Ascending aorta (tissue), 2 donors: ENCODE measurements at regions of chr2 and their contacts with region 1.

Region 1: DNA sequence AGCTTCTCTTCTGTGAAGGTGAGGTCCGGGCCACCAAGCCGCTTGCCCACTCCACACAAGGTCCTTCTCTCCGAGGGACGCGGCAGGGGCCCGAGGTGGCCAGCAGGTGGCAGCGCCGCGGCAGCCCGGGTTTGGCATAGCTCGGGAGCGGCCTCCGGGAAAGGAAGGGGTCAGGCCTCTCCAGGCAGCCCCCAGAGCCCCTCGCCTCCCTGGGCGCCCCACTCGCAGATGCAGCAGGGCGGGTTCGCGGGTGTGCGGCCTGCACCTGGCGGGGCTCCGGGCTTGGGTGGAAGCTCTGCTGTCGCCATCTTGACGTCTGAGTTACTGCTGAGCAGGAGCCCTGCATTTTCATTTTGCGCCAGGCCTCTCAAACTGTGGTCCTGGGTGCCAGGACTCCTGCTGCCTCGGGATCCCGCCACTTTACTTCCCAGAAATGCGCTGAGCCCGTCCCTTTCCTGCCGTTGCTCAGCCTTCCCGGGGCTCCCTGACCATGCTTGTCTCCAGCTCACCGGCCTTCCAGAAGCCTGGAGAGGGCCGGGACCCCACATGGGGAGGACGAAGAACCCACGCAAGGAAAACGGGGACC is 18.6 kb upstream of the NCL start:
- DNase-seq: peak in 1 of 2 donors; percentile 87
- H3K4me3 ChIP-seq: peak overlapping the region; percentile 51 to 74
- H3K27ac ChIP-seq: peak overlapping the region; percentile 86 to 89
- H3K4me1 ChIP-seq: peaks cover 0 to 5% of the 10 kb centered on the region in 2 donors
- H3K27me3 ChIP-seq: no peaks in the 10 kb centered on the region
- CTCF ChIP-seq: peak; percentile 74 to 93 (median 93)

Region 2: GRCh38 chr2:230942920-230943896 is 539.7 kb before region 1 on chr2:
- intact Hi-C with region 1: no loop called
- DNase-seq: no peak
- H3K4me3 ChIP-seq: peak overlapping the region in 1 of 2 donors; percentile 8
- H3K27ac ChIP-seq: no peak overlapping the region
- H3K4me1 ChIP-seq: no peaks in the 10 kb centered on the region
- H3K27me3 ChIP-seq: no peaks in the 10 kb centered on the region
- CTCF ChIP-seq: no peak

Region 3: GRCh38 chr2:231463698-231464575 is 19.0 kb before region 1 on chr2 and contains the start of gene NCL:
- intact Hi-C with region 1: loop called (anchors 1 kb)
- DNase-seq: peak; percentile 35 to 88
- H3K4me3 ChIP-seq: peak within 1 kb of the TSS; percentile 78 to 79
- H3K27ac ChIP-seq: peak within 1 kb of the TSS; percentile 97 to 98
- H3K4me1 ChIP-seq: peaks cover 6 to 16% of the 10 kb centered on the region in 2 donors
- H3K27me3 ChIP-seq: no peaks in the 10 kb centered on the region
- CTCF ChIP-seq: no peak
- total RNA-seq, gene NCL: 136 TPM

Region 4: DNA sequence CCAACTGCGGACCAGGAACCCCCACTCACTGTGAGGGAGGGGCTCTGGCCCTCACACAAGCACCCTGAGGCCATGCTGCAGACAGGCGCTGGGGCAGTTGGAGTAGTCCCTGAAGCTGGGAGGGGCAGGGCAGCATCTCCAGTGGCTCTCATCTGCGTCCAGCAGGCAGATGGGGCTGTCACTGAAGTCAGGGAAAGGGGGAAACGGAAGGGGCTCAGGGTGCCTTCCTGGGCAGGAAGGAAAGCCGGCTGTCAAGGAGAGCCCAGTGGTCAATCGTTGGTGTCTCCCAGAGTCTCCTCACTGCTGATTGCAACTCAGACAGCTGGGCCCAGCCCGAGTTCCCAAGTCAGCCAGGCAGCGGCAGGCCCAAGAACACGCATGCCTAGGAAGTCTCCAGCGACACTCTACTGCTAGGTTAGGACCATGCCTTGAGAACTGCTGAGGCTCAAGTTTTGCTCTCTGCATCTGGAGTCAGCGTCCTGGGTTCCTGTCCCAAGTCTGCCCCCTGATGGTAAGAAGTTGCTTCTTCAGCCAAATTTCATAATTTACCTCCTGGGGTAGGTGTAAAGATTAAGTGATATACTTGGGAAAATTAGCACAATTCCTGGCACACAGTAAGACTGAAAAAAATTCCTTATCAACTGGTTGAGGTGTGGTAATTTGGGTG is 74.8 kb after region 1 on chr2:
- intact Hi-C with region 1: loop called (anchors 1 kb)
- DNase-seq: peak; percentile 15 to 78
- H3K4me3 ChIP-seq: no peak overlapping the region
- H3K27ac ChIP-seq: no peak overlapping the region
- H3K4me1 ChIP-seq: no peaks in the 10 kb centered on the region
- H3K27me3 ChIP-seq: no peaks in the 10 kb centered on the region
- CTCF ChIP-seq: peak; percentile 28 to 61 (median 44)

Region 5: GRCh38 chr2:232073026-232073425 is 590.1 kb after region 1 on chr2:
- intact Hi-C with region 1: no loop called
- DNase-seq: no peak
- H3K4me3 ChIP-seq: no peak overlapping the region
- H3K27ac ChIP-seq: no peak overlapping the region
- H3K4me1 ChIP-seq: no peaks in the 10 kb centered on the region
- H3K27me3 ChIP-seq: no peaks in the 10 kb centered on the region
- CTCF ChIP-seq: no peak